Sigmoid colon (tissue), 7 donors: ENCODE measurements at regions of chr19 and their contacts with region 1.

Region 1: GRCh38 chr19:15779756-15780476 is 7.5 kb upstream of the OR10H5 start:
- DNase-seq: peak; percentile 92
- H3K4me3 ChIP-seq: peak overlapping the region in 3 of 4 donors; percentile 3 to 33 (median 18)
- H3K27ac ChIP-seq: peak overlapping the region; percentile 72 to 79 (median 77)
- H3K4me1 ChIP-seq: peaks cover 0 to 25% (median 22%) of the 10 kb centered on the region in 4 donors
- H3K27me3 ChIP-seq: no peaks in the 10 kb centered on the region
- CTCF ChIP-seq: no peak
- EP300 ChIP-seq: no peak
- POLR2A ChIP-seq: no peak

Region 2: GRCh38 chr19:15640294-15640903 is 139.5 kb before region 1 on chr19 and contains the start of gene CYP4F3:
- intact Hi-C with region 1: no loop called
- DNase-seq: no peak
- H3K4me3 ChIP-seq: no peak within 1 kb of the TSS
- H3K27ac ChIP-seq: no peak within 1 kb of the TSS
- H3K4me1 ChIP-seq: no peaks in the 10 kb centered on the region
- H3K27me3 ChIP-seq: peaks cover 0 to 5% (median 0%) of the 10 kb centered on the region in 3 donors
- CTCF ChIP-seq: no peak
- EP300 ChIP-seq: no peak
- POLR2A ChIP-seq: no peak
- total RNA-seq, gene CYP4F3: not detected

Region 3: DNA sequence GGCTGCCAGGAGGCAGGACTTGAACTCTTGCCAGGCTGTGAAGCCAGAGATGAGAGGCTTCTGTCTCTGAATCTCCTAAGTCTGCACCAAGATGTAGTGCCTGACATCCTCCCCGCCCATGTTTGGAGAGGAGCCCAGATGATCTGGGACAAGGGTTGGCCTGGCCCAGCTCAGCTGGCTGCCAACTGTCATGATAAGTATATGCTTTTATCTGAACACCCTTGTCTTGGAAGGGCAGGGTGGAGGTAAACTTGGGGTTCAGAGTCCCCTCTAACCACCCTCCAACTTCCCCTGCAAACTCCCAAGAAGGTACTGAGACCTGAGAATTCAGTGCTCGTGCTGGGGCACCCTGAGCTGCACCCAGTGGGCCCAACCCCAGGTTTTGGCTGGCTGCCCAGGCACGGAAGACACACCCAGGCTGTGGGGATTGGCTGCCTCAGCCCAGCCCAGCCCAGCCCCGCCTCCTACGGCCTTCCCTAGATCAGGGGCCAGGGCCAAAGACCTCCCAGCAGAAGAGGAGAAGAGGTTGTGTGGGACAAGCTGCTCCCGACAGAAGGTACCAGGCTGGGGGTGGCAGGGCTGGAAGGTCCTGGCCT is 107.2 kb before region 1 on chr19 and contains the start of gene CYP4F12:
- intact Hi-C with region 1: loop called (anchors 5 kb)
- DNase-seq: peak; percentile 97
- H3K4me3 ChIP-seq: peak within 1 kb of the TSS in 2 of 4 donors; percentile 20 to 28
- H3K27ac ChIP-seq: peak within 1 kb of the TSS; percentile 61 to 76 (median 72)
- H3K4me1 ChIP-seq: peaks cover 0 to 21% (median 17%) of the 10 kb centered on the region in 4 donors
- H3K27me3 ChIP-seq: no peaks in the 10 kb centered on the region
- CTCF ChIP-seq: no peak
- EP300 ChIP-seq: no peak
- POLR2A ChIP-seq: peak in 1 of 2 donors; percentile 24
- total RNA-seq, gene CYP4F12: 10.5 to 18.8 (median 13.7) TPM